Naive thymus-derived CD4-positive, alpha-beta T cell (primary cell): ENCODE measurements at regions of chr3 and their contacts with region 1.

Region 1: DNA sequence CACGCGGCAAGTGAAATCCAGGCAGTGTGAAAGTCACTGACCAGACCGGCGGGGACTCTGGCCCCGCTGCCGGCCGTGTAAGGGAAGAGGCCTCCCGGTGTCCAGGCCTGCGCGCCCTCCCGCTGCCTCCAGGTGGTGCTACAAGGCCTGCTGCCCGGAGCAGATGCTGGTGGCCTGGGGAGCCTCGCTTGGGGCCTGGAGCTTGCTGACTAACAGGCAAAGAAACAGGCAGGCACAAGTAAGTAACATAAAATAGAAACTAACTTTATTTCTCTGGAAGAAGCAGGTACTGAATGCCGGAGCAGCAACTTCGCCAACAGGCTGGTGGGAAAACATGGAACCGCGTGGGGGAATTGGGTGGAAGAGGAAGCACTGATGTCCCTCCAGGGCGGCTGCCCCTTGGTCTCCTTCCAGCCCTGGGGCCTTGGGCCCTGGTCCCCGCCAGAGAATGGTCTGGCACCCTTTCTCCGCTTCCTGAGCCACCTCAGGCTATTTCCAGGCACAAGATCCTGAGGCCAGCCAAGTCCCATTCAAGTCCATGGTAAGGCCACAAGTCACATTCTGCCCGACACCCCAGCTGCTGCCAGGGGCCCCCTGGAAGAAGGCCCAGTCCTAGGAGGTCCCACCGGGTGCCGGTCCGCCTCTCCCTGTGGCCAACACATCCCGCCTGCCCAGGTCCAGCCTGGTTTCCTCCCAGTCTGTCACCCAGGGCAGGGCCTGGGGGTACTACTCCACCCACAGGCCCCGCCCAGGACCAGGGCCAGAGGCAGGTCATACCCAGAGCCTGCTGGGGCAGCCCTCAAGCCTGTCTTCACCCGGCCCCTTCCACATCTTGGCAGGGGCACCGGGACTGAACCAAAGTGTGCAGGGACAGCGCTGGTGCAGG is 45.0 kb downstream of the TNK2 start:
- DNase-seq: peak; percentile 29 to 73 (median 50)
- ATAC-seq: peak; percentile 91
- H3K4me3 ChIP-seq: no peak overlapping the region
- H3K4me3 Mint-ChIP-seq: no peak overlapping the region
- H3K27ac ChIP-seq: no peak overlapping the region
- H3K27ac Mint-ChIP-seq: peak overlapping the region in 2 of 9 donors; percentile 62 to 77
- H3K4me1 ChIP-seq: no peaks in the 10 kb centered on the region
- H3K4me1 Mint-ChIP-seq: peaks cover 3 to 15% (median 7%) of the 10 kb centered on the region in 7 donors
- H3K27me3 ChIP-seq: no peaks in the 10 kb centered on the region
- H3K27me3 Mint-ChIP-seq: no peaks in the 10 kb centered on the region

Region 2: DNA sequence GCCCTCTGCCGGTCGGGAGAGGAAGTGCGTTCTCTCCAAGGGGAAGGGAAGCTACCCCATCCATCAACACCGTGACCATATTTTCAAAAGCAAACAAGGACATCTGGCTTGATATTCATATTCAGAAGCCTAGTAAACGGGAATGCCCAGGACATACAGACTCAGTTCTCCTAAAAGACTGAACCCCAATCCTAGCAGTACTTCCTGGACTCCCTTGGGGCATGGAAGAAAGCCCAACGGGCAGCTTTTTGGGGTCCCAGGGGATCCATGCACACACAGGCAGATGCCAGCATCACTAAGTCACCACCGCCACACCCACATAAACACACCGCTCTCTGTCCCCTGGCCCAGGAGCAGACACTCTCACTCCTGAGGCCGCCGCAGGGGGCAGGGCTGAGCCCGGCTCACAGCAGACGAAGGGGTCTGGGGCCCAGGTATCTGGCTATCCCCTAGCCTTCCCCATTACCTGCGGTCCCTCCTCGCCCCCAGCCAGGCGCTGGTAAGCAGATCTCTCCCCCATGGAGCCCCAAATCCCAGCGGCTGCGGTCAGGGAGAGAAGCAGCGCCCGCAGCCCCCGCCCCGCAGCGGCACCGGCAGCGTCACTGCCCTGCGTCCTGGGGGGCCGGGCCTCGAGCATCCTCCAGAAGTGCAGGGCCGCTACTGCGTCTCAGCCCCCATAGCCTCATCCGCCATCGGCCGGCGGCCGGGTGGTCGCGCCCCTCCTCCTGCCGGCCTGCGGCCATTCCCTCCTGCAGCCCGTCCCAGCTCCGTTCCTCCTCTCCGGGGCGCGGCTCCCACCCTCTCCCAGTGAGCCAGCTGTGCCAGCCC is 31.6 kb after region 1 on chr3:
- CTCF ChIA-PET with region 1: interaction called, 18 read pairs
- POLR2A ChIA-PET with region 1: interaction called, 3 read pairs
- intact Hi-C with region 1: loop called (anchors 1 kb)
- DNase-seq: peak; percentile 58 to 77 (median 69)
- ATAC-seq: peak; percentile 78
- H3K4me3 ChIP-seq: peak overlapping the region; percentile 98
- H3K4me3 Mint-ChIP-seq: peak overlapping the region; percentile 88 to 96 (median 92)
- H3K27ac ChIP-seq: peak overlapping the region; percentile 75
- H3K27ac Mint-ChIP-seq: peak overlapping the region; percentile 88 to 96 (median 91)
- H3K4me1 ChIP-seq: peaks cover 7 to 32% of the 10 kb centered on the region in 2 donors
- H3K4me1 Mint-ChIP-seq: peaks cover 43 to 60% (median 49%) of the 10 kb centered on the region in 7 donors
- H3K27me3 ChIP-seq: no peaks in the 10 kb centered on the region
- H3K27me3 Mint-ChIP-seq: no peaks in the 10 kb centered on the region